Activated CD4-positive, alpha-beta T cell treated with anti-CD3 and anti-CD28 coated beads for 36 hours (primary cell): ENCODE measurements at regions of chr19 and their contacts with region 1.

Region 1: DNA sequence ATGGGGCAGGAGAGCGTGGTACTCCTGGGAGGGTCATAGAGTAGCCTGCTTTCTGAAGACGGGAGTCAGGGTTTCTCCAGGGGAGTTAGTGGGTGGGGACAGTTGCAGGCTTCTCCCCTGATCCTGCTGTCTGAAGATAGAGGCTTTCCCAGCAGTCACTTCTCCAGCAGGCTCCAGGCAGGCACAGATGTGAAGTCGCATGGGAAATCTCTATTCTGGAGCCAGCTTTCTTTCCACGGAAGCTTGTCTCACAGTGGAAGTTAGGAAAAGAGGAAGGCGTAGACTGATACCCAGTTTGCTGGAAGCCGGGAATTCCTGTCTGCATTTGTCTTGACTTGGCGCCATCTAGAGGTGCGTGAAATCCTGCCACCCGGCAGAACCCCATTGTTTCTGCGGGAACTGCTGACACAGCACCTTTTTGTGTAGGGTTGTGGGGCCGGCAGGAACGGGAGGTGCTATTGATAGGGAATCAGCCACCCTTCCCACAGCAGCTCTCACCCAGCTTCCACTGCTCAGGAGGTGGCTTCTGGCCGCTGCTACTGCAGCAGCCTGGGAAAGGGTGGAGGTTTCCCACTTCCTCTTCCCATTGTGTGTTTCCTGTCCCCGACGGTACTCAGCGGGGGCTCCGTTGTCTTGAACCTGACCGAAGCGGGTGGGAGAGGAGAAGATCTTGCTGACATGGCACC is 28.5 kb upstream of the NPAS1 start:
- DNase-seq: peak; percentile 82
- ATAC-seq: peak; percentile 87
- H3K4me3 Mint-ChIP-seq: no peak overlapping the region
- H3K27ac Mint-ChIP-seq: peak overlapping the region; percentile 13
- H3K4me1 Mint-ChIP-seq: peaks cover 10% of the 10 kb centered on the region
- H3K27me3 Mint-ChIP-seq: no peaks in the 10 kb centered on the region

Region 2: DNA sequence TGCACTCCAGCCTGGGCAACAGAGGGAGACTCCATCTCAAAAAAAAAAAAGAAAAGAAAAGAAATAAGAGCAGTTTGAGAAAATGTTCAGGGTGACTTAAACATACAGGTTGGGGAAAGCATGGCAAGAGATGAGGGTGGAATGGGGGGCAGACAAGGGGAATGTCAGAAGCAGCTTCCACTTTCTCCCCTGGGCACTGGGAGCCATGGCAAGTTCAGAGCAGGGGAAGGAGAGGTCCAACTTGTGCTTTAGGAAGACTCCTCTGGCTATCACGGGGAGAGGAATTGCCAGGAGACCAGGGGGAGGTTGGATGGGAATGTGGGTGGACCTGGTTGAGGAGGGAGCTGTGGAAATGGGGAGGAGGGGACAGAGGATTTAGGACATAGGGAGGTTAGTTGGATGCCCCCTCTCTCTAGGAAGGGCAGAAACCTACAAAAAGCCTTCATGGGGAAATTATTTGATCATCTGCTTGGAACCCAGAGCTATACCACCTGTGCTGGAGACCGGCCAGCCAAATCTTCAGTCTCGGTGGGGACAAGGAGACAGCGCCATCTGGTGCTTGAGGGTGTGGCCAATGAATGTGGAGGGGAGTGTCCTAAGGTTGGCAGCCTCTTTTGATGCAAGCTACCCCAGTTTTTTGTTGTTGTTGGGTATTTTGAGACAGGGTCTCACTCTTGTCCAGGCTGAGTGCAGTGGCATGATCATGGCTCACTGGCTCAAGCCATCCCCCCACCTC is 237.5 kb before region 1 on chr19:
- CTCF ChIA-PET with region 1: interaction called, 8 read pairs
- POLR2A ChIA-PET with region 1: no interaction called
- intact Hi-C with region 1: loop called (anchors 2 to 10 kb)
- DNase-seq: peak; percentile 86
- ATAC-seq: peak; percentile 91
- H3K4me3 Mint-ChIP-seq: no peak overlapping the region
- H3K27ac Mint-ChIP-seq: no peak overlapping the region
- H3K4me1 Mint-ChIP-seq: peaks cover 6% of the 10 kb centered on the region
- H3K27me3 Mint-ChIP-seq: no peaks in the 10 kb centered on the region

Region 3: DNA sequence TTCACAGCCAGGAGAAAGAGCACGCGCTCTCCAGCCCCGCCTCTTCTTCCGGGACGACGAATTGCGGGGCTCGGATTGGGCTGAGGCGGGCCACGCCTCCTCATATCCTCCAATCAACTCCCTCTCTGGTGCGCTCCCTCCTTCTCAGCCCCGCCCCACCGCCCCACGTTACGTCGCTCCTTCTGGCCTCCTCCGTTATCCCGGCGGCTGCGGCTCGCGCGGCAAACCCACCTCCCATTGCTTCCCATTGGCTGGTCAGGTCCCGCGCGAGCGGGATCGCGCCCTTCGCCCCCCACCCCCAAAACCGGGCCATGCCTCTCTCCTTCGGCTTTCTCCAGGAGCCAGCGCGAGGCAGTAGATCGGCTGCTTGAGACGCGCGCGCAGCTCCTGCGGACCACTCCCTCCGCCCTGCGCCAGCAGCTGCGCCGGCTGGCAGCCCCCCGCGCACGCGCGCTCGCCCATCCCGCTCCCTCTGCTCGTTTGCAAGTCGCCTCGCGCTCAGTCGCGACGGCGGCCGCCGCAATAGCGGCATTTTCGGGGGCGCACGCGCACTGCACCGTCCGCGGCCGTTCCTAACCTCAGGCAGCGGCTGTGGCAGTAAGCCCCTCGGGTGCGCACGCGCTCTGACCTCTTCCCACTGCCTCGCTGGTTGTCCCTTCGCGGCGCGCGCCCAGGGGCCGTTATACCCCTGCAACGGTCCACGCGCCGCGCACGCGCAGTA is 130.8 kb before region 1 on chr19:
- CTCF ChIA-PET with region 1: interaction called, 5 read pairs
- POLR2A ChIA-PET with region 1: no interaction called
- intact Hi-C with region 1: loop called (anchors 1 kb)
- DNase-seq: peak; percentile 99
- ATAC-seq: peak; percentile 82
- H3K4me3 Mint-ChIP-seq: no peak overlapping the region
- H3K27ac Mint-ChIP-seq: peak overlapping the region; percentile 78
- H3K4me1 Mint-ChIP-seq: peaks cover 25% of the 10 kb centered on the region
- H3K27me3 Mint-ChIP-seq: no peaks in the 10 kb centered on the region

Region 4: DNA sequence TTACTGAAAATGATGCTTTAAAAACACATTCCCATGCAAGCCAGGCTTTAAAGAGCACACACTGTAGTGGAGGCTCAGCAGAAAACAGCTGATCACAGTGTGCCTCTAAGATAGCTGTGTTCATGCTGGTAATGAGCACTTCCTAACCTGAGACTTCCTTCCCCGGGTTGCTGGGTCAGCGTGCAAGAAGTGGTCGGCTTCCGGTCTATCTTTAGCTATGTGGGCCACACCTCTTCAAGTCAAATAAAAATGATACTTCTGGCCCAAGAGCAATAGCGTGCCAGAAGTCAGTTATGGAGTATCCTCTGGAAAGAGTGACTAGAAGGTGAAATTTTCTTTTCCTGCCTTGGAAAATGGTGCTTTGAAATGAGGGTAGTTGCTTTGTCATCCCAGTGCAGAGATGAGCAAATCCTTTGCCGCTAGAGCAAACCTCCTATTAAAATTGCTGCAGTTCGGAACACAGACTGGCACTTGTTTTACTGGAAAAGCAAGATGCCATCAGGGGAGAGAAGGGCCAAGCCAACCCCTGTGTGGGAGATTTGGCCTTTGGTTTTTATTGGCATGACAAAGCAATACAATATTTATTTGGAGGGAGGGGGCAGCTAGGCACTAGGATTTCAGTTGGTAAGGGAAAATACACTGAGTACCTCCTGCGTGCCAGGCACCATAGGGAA is 66.1 kb before region 1 on chr19:
- CTCF ChIA-PET with region 1: interaction called, 3 read pairs
- POLR2A ChIA-PET with region 1: no interaction called
- intact Hi-C with region 1: loop called in 1 of 2 experiments (anchors 5 kb)
- DNase-seq: peak; percentile 29
- ATAC-seq: peak; percentile 82
- H3K4me3 Mint-ChIP-seq: no peak overlapping the region
- H3K27ac Mint-ChIP-seq: peak overlapping the region; percentile 55
- H3K4me1 Mint-ChIP-seq: peaks cover 41% of the 10 kb centered on the region
- H3K27me3 Mint-ChIP-seq: no peaks in the 10 kb centered on the region

Region 5: GRCh38 chr19:47013041-47013517 is 21.9 kb after region 1 on chr19:
- CTCF ChIA-PET with region 1: interaction called, 16 read pairs
- POLR2A ChIA-PET with region 1: no interaction called
- intact Hi-C with region 1: no loop called
- DNase-seq: peak; percentile 79
- ATAC-seq: peak; percentile 87
- H3K4me3 Mint-ChIP-seq: no peak overlapping the region
- H3K27ac Mint-ChIP-seq: no peak overlapping the region
- H3K4me1 Mint-ChIP-seq: peaks cover 7% of the 10 kb centered on the region
- H3K27me3 Mint-ChIP-seq: no peaks in the 10 kb centered on the region

Region 6: DNA sequence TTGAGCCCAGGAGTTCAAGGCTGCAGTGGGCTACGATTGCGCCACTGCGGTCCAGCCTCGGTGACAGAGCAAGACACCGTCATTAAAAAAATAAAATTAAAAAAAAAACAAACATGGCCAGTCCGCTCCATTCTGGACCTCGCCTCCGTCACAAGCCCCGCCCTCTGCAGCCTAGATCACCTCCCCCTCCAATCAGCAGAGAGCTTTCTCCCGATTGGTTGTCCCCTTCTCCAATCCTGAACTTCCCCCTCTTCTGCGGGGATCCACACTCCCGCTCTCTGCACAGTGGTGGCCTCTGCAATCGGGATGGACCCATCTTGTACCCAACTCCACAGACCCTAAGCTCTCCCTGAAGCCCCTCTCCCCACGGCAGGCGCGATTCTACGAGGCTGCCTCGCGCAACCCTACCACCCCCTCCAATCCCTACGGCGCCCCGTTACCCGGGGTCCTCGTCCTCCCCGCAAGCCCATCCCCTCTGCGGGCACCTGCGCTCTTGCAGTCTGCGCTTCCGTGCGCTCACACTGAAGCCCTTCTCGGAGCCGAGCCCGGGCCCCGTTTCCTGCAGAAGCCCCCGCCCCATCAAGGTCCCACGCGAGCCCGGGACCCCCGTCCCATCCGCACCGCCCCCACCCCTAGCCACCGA is 56.8 kb after region 1 on chr19:
- CTCF ChIA-PET with region 1: no interaction called
- POLR2A ChIA-PET with region 1: no interaction called
- intact Hi-C with region 1: no loop called
- DNase-seq: peak; percentile 92
- ATAC-seq: peak; percentile 73
- H3K4me3 Mint-ChIP-seq: peak overlapping the region; percentile 90
- H3K27ac Mint-ChIP-seq: peak overlapping the region; percentile 86
- H3K4me1 Mint-ChIP-seq: peaks cover 8% of the 10 kb centered on the region
- H3K27me3 Mint-ChIP-seq: no peaks in the 10 kb centered on the region

Region 7: DNA sequence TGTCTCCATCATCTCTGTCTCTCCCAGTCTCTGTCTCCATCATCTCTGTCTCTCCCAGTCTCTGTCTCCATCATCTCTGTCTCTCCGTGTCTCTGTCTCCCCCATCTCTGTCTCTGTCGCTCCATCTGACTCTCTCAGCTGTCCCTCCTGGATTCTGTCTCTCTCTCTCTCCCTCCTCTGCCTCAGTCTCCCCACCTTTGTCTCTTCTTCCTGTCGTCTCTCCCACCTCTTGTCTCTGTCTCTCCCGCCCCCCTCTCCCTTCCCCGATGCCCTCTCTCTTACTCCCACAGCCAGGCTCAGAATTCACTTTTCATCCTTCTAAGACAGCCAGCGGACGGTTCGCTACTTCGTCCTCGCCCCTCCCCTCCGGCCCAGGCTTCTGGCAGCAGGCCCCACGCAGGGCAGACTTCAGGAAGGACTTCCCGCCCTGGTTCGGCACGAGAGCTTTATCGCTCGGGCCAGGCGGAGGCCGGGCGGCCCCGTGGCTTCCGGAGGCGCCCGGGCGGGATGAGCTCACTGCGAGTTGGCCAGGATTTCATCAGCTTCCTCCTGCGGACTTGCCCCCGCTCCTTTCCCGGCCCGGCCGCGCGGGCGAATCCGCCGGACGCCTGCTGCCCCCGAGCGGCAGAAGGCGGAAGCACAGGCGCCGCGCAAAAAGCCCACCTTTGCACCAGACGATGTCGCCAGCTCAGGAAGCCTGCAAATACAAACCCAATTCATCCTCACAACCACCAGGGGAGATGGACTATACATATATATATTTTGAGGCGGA is 252.8 kb after region 1 on chr19:
- CTCF ChIA-PET with region 1: no interaction called
- POLR2A ChIA-PET with region 1: no interaction called
- intact Hi-C with region 1: no loop called
- DNase-seq: peak; percentile 96
- ATAC-seq: peak; percentile 74
- H3K4me3 Mint-ChIP-seq: no peak overlapping the region
- H3K27ac Mint-ChIP-seq: peak overlapping the region; percentile 97
- H3K4me1 Mint-ChIP-seq: peaks cover 35% of the 10 kb centered on the region
- H3K27me3 Mint-ChIP-seq: peaks cover 2% of the 10 kb centered on the region

Region 8: DNA sequence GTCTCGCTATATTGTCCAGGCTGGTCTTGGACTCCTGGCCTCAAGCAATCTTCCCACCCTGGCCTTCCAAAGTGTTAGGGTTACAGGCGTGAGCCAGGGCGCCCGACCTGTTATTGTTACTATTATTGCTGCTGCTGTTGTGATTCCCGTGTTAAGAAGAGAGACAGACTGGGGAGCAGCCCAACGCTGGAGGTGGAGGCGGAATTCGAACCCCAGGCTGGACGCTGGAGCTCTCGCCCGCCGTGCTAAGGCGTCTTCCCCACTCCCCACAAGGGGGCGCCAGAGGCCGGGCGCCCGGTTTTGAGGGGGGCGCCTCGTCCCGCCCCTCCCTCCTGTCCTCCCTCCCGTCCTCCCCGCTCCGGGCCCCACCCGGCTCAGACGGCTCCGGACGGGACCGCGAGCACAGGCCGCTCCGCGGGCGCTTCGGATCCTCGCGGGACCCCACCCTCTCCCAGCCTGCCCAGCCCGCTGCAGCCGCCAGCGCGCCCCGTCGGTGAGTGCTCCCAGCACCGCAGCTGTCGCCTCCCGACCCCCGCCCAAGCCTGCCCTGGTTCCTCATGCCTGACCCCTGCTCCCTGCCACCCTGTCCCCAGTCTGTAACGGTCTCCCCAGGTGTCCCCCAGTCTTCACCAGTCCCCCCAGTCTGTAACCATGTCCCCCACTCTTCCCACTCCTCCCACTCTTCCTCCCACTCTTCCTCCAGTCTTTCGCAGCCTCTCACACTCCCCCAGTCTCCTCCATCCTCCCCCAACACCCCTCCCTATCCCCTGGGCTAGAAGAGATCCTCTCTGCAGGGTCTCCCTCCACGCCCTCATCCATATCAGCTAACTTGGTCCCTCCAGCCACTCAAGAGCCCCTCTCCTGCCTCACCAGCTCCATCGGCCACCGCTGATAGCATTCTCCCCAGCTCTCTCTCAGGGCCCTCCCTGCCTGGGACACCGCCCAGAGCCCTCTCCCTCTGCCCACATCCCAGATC is 722.2 kb after region 1 on chr19 and contains the start of gene EHD2:
- CTCF ChIA-PET with region 1: no interaction called
- POLR2A ChIA-PET with region 1: no interaction called
- intact Hi-C with region 1: no loop called
- DNase-seq: peak; percentile 76
- ATAC-seq: peak; percentile 78
- H3K4me3 Mint-ChIP-seq: peak within 1 kb of the TSS; percentile 53
- H3K27ac Mint-ChIP-seq: no peak within 1 kb of the TSS
- H3K4me1 Mint-ChIP-seq: peaks cover 5% of the 10 kb centered on the region
- H3K27me3 Mint-ChIP-seq: peaks cover 37% of the 10 kb centered on the region
- total RNA-seq, gene EHD2: 1.6 to 2.5 TPM